ENCODE measurements at regions of chr7 and their contacts with region 1.

Region 1: DNA sequence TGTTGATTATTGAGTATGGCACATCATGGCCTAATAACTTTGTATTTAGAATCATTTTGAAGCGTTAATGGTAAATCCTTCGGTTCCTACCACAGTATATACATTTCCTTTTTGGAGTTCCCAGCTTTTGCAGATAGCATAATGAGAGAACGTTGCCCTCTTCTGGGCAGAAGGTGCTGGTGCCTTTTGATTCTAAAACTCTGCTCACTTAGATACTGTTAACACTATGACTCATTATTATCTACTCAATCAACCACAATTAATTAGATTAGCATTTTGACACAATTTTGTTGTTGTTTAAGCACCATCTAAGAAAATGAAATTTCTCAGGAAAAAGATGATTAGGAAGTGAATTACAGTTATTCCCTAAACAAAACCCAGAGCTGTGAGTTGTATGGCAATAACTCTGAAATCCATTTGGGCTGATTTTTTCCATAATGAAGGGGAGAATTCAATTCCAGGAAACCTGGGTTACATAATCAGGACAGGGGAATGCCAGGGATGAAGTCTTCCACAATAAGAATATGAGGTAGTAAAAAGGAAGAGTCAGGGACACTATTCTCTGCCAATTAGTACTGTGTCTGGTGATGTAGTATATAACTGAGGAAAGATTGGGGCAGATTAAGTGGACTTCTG is 11.5 kb upstream of the DLD start:
- DNase-seq: no peak
- H3K4me3 ChIP-seq: no peak overlapping the region
- CTCF ChIP-seq: peak; percentile 64

Region 2: GRCh38 chr7:107743567-107744344 is 135.8 kb before region 1 on chr7 and contains the start of gene CBLL1:
- CTCF ChIA-PET with region 1: interaction called, 82 read pairs
- POLR2A ChIA-PET with region 1: interaction called, 9 read pairs
- DNase-seq: peak; percentile 63
- H3K4me3 ChIP-seq: peak within 1 kb of the TSS; percentile 98
- CTCF ChIP-seq: peak; percentile 89

Region 3: DNA sequence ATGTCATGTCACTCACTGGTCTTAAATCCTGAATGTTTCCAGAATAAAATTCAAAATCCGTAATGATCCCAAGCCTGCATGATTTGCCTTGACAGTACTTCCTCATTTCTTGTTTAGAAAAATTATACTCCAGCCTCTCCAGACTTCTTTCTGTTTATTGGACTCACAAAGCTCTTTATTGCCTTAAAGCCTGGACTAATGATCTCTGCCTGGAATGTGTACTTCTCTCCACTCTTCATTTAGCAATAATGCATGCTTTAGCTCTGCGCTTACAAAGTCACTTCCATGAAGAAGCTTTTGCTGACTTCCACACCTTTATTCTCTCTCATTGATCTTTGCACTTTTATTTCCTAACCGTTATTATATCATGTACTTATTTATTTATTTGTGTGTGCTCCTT is 49.1 kb before region 1 on chr7:
- CTCF ChIA-PET with region 1: no interaction called
- POLR2A ChIA-PET with region 1: no interaction called
- DNase-seq: no peak
- H3K4me3 ChIP-seq: no peak overlapping the region
- CTCF ChIP-seq: no peak

Region 4: DNA sequence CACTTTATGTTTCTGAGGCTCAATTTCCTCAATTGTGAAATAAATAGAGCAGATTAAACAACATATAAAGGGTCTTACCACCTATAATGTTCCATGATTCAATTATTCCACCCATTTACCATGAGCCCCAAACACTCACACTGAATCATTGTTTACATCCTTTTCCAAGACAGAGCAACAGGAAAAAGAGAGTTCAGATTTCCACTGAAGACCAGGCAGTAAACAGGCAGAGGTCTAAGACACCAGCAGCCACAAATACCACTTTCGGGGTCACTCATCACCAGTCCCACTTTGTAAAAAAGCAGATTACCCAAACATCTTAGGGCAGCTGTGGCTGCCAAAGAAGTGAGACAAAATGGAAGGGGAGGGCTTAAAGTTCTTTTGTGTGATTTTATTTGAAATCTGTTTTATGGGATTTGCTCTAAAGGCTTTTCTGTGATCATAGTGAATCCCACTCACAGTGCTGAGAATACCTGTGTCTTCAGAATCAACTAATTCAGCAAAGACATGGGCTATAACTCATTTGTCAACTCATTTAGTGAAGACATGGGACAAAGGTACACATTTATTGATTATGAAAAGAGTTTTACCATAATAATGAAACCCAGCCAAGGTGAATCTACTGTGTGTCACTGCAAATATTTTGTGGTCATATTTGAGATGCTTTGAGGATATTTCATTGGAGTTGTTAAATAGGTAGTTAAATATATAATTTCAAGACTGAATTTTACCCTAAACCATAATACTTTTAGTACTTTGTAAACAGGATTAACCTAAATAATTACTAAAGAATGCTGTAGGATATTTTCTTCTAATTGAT is 13.4 kb before region 1 on chr7:
- CTCF ChIA-PET with region 1: interaction called, 20 read pairs
- POLR2A ChIA-PET with region 1: no interaction called
- DNase-seq: no peak
- H3K4me3 ChIP-seq: no peak overlapping the region
- CTCF ChIP-seq: no peak

Region 5: GRCh38 chr7:107890962-107891635 is 11.6 kb after region 1 on chr7 and contains the start of gene DLD:
- CTCF ChIA-PET with region 1: interaction called, 76 read pairs
- POLR2A ChIA-PET with region 1: no interaction called
- DNase-seq: peak; percentile 40
- H3K4me3 ChIP-seq: peak within 1 kb of the TSS; percentile 93
- CTCF ChIP-seq: no peak